ENCODE measurements at regions of chr13 and their contacts with region 1.

Region 1: GRCh38 chr13:111046590-111047141 is 68.4 kb upstream of the ARHGEF7 start:
- DNase-seq: no peak
- ATAC-seq: no peak
- H3K4me3 ChIP-seq: no peak overlapping the region
- H3K27ac ChIP-seq: no peak overlapping the region
- H3K4me1 ChIP-seq: peaks cover 0 to 29% of the 10 kb centered on the region in 2 experiments; a peak in 2 of 4 replicates
- H3K27me3 ChIP-seq: no peaks in the 10 kb centered on the region
- CTCF ChIP-seq: peak in 1 of 3 experiments; percentile 32; a peak in 3 of 6 replicates
- POLR2A ChIP-seq: no peak
- RAD21 ChIP-seq: no peak

Region 2: DNA sequence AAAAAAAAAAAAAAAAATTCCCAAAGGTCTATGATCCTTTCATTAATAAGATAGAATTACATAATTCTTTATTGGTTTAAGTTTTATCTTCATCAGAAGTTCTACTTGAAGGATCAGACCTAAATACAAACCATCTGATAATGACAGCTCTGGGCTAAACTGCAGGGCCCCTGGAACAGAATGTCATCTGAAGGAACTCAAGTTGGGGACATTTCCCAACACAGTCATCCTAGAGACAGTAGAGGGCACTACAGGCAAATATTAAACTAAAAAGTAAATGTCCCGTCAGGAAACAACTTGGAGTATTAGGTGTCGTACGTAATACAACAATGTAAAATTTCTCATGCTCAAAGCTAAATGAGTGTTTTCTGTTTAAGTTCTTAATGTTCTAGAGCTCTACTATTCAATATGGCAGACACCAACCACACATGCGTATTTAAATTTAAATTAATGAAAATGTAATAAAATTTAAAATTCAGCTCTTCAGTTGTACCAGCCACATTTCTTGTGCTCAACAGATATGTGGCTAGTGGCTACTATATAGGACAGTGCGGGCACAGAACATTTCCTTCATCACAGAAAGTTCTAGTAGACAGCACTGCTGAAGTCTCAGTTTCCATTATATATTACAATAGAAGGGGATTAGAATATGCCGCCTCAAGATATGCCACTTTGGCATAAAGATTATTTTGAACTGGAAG is 453.1 kb before region 1 on chr13:
- CTCF ChIA-PET with region 1: interaction called, 6 read pairs
- POLR2A ChIA-PET with region 1: no interaction called
- RAD21 ChIA-PET with region 1: no interaction called
- intact Hi-C with region 1: loop called (anchors 10 kb)
- DNase-seq: peak; percentile 50
- ATAC-seq: peak; percentile 93
- H3K4me3 ChIP-seq: no peak overlapping the region
- H3K27ac ChIP-seq: no peak overlapping the region
- H3K4me1 ChIP-seq: peaks cover 2 to 5% of the 10 kb centered on the region in 2 experiments; a peak in 2 of 4 replicates
- H3K27me3 ChIP-seq: no peaks in the 10 kb centered on the region
- CTCF ChIP-seq: peak; percentile 48 to 72 (median 70); a peak in 5 of 6 replicates
- POLR2A ChIP-seq: no peak
- RAD21 ChIP-seq: peak; percentile 81

Region 3: DNA sequence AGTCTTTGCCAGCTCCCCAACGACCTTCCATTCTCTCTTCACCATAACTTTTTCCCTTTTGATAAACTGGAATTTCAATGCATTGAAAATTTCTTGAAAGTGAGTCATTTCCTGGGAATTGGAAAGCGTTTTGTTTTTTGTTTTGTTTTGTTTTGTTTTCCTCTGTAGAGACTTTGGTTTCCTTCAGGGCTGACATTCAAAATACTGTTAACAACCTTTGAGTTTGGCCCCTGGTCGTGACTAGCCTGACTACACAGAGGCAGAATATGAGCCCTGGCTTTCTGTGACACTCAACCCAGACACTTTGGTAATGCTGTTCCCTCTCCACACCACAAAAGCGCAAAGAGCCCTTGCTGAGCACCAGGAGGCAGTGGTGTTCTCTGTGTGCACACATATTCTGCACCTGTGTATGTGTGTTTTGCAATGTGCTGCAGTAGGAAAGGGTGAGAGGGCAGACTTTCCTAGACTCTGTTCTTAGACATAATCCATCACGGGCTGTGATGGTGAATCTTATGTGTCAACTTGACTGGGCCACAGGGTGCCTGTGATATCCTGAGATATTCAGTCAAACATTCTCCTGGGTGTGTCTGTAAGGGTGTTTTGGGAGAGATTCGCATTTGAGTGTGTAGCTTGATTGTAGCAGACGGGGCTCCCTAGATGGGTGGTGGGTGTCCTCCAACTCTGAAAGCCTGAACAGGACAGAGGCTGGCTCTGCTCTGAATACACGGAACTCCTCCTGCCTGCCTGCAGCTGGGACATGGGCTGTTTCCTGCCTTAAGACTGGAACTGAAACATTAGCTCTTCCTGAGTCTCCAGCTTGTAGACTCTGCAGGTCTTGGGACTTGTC is 102.3 kb before region 1 on chr13:
- CTCF ChIA-PET with region 1: interaction called, 3 read pairs
- POLR2A ChIA-PET with region 1: no interaction called
- RAD21 ChIA-PET with region 1: interaction called in 1 of 2 experiments, 3 read pairs
- intact Hi-C with region 1: loop called (anchors 1 kb)
- DNase-seq: peak; percentile 77
- ATAC-seq: peak; percentile 97
- H3K4me3 ChIP-seq: no peak overlapping the region
- H3K27ac ChIP-seq: peak overlapping the region; percentile 38
- H3K4me1 ChIP-seq: peaks cover 10 to 64% of the 10 kb centered on the region in 2 experiments
- H3K27me3 ChIP-seq: no peaks in the 10 kb centered on the region
- CTCF ChIP-seq: peak in 2 of 3 experiments; percentile 93 to 94; a peak in 4 of 6 replicates
- POLR2A ChIP-seq: no peak
- RAD21 ChIP-seq: no peak

Region 4: GRCh38 chr13:111474136-111475002 is 427.7 kb after region 1 on chr13:
- CTCF ChIA-PET with region 1: no interaction called
- POLR2A ChIA-PET with region 1: no interaction called
- RAD21 ChIA-PET with region 1: no interaction called
- intact Hi-C with region 1: no loop called
- DNase-seq: peak; percentile 21
- ATAC-seq: peak; percentile 85
- H3K4me3 ChIP-seq: no peak overlapping the region
- H3K27ac ChIP-seq: no peak overlapping the region
- H3K4me1 ChIP-seq: no peaks in the 10 kb centered on the region
- H3K27me3 ChIP-seq: no peaks in the 10 kb centered on the region
- CTCF ChIP-seq: peak; percentile 55 to 66 (median 58); a peak in 5 of 6 replicates
- POLR2A ChIP-seq: no peak
- RAD21 ChIP-seq: peak; percentile 76